Breast epithelium (tissue), 4 donors: ENCODE measurements at regions of chr1 and their contacts with region 1.

Region 1: GRCh38 chr1:108117237-108117636 is 82.9 kb downstream of the SLC25A24 start:
- DNase-seq: no peak
- H3K4me3 ChIP-seq: no peak overlapping the region
- H3K27ac ChIP-seq: no peak overlapping the region
- H3K4me1 ChIP-seq: no peaks in the 10 kb centered on the region
- H3K27me3 ChIP-seq: no peaks in the 10 kb centered on the region
- CTCF ChIP-seq: no peak
- POLR2A ChIP-seq: no peak

Region 2: GRCh38 chr1:107529502-107530149 is 587.6 kb before region 1 on chr1:
- intact Hi-C with region 1: no loop called
- DNase-seq: peak in 1 of 2 donors; percentile 30
- H3K4me3 ChIP-seq: no peak overlapping the region
- H3K27ac ChIP-seq: peak overlapping the region; percentile 60 to 70
- H3K4me1 ChIP-seq: no peaks in the 10 kb centered on the region
- H3K27me3 ChIP-seq: no peaks in the 10 kb centered on the region
- CTCF ChIP-seq: peak; percentile 72 to 86 (median 74)
- POLR2A ChIP-seq: no peak

Region 3: GRCh38 chr1:108059945-108060344 is 57.3 kb before region 1 on chr1:
- intact Hi-C with region 1: loop called (anchors 2 kb)
- DNase-seq: no peak
- H3K4me3 ChIP-seq: no peak overlapping the region
- H3K27ac ChIP-seq: peak overlapping the region in 1 of 2 donors; percentile 15
- H3K4me1 ChIP-seq: no peaks in the 10 kb centered on the region
- H3K27me3 ChIP-seq: no peaks in the 10 kb centered on the region
- CTCF ChIP-seq: no peak
- POLR2A ChIP-seq: no peak